Right lobe of liver (tissue), 6 donors: ENCODE measurements at regions of chr13 and their contacts with region 1.

Region 1: DNA sequence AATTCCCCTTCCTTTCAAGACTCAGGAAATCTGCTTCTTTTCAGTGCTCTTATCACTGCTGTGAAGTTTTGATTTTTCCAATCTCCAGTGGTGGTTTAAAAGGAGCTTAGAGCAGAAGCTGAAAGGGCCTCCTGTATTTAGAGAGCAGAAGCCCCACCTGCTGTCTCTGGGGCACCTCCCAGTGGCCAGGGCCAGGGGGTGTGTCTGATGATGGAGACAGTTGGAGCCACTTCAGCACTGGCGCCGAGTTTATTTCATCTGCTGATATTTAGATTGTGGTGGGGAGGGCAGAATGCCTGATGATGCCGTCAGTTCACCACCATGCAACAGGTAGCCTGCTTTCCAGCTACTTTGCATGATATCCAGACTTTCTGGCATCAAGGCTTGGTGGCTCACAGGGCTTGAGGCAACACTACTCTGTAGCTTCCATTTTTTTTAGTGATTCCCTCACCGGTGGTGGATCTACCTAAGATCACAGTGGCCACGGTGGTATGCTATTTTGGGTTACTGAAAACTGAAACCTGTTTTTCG is 371.9 kb downstream of the KCNRG start:
- DNase-seq: peak; percentile 87 to 92 (median 92)
- ATAC-seq: peak; percentile 96 to 98 (median 96)
- H3K4me3 ChIP-seq: peak overlapping the region in 2 of 3 donors; percentile 36 to 45
- H3K27ac ChIP-seq: peak overlapping the region; percentile 80 to 97 (median 96)
- H3K4me1 ChIP-seq: peaks cover 0 to 14% (median 3%) of the 10 kb centered on the region in 4 donors
- H3K27me3 ChIP-seq: no peaks in the 10 kb centered on the region
- CTCF ChIP-seq: peak; percentile 35 to 52 (median 44)
- POLR2A ChIP-seq: peak; percentile 46

Region 2: DNA sequence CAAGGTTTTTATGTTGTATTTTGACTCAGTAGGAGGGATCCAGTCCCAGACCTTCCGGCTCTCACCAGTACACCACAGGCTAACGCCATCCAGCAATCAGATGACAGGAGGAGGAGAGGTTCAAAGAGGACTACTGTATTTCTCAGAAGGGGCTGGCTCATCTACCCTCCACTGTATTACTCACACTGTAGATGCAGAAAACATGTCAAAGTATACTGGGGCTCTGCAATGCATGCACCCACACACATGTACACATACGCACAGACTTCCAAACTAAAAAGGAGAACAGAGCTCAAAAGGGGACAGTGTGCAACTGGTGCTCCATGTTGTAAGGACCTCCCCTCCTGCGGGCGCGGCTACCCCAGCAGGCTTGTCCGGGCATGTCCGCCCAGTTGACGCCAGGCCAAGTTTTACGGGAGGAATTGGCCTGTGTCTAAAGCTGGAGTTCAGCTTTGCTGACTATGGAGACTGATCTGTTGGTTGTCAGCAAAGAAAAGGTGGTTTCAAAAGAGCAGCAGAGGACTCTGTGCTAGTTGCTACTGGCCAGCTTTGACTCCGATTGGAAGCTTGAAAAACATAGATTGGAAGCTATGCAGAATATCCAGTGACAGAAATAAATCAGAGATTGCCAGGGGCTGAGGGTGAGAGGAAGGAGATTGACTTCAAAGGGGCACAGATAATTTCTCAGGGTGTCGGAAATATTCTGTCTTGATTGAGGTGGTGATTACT is 142.2 kb after region 1 on chr13:
- intact Hi-C with region 1: loop called in 1 of 2 experiments (anchors 10 kb)
- DNase-seq: peak; percentile 83 to 95 (median 93)
- ATAC-seq: peak; percentile 81 to 94 (median 92)
- H3K4me3 ChIP-seq: peak overlapping the region in 2 of 3 donors; percentile 14 to 17
- H3K27ac ChIP-seq: peak overlapping the region; percentile 6 to 69 (median 58)
- H3K4me1 ChIP-seq: peaks cover 0 to 23% (median 2%) of the 10 kb centered on the region in 4 donors
- H3K27me3 ChIP-seq: no peaks in the 10 kb centered on the region
- CTCF ChIP-seq: no peak
- POLR2A ChIP-seq: peak; percentile 23